MCF 10A (cell line): ENCODE measurements at regions of chr4 and their contacts with region 1.

Region 1: GRCh38 chr4:165327211-165328100 is at the start of gene MSMO1:
- DNase-seq: peak; percentile 99
- H3K4me3 Mint-ChIP-seq: no peak within 1 kb of the TSS
- H3K27ac Mint-ChIP-seq: no peak within 1 kb of the TSS
- H3K4me1 Mint-ChIP-seq: peaks cover 37% of the 10 kb centered on the region
- H3K27me3 Mint-ChIP-seq: no peaks in the 10 kb centered on the region
- CTCF ChIP-seq: no peak
- total RNA-seq, gene MSMO1: 80.4 and 94.9 TPM in 2 replicates

Region 2: DNA sequence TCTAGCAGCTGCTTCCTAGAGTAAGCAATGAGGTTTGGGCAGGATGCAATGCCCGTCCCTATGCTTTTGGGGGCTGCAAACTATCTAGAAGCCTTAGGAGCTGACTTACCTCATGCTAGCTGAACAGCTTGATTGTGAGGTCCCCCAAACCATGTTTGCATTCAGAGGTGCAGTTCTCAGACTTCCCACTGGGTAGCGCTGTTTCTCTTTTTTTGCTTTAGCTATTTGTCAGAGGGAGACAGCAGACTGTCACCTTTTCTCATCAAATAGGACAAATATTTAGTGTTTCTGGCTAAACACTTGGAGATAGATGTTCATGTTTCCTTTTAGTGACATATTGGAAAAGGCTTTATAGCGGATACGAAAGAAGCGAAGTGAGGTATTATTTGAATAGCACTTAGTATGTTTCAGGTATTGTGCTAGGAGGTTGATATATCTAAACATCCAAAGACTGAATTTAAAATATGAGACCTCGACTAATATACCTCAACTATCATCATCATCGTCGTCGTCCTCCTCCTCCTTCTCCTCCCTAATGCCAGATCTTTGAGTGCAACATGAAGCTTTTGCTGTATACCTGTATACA is 196.1 kb before region 1 on chr4:
- CTCF ChIA-PET with region 1: interaction called, 22 read pairs
- POLR2A ChIA-PET with region 1: interaction called, 32 read pairs
- intact Hi-C with region 1: loop called (anchors 1 kb)
- DNase-seq: peak; percentile 78
- H3K4me3 Mint-ChIP-seq: no peak overlapping the region
- H3K27ac Mint-ChIP-seq: no peak overlapping the region
- H3K4me1 Mint-ChIP-seq: peaks cover 6% of the 10 kb centered on the region
- H3K27me3 Mint-ChIP-seq: no peaks in the 10 kb centered on the region
- CTCF ChIP-seq: peak; percentile 86

Region 3: DNA sequence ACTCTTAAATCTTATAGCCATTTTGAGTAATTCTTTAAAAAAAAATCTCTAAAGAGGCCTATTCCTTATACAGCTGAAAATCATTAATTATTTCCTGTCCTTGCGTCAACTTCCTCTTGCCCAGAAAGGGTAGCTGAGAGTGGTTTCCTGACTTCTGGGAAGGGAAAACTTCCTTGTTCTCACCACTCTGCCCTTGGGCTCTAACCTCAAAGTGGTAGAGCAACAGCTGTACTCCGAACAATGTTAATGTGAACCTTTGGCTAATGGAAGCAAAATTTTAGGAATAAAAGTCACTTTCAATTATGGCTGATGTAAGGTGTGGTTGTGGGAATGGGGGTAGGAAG is 104.8 kb before region 1 on chr4:
- CTCF ChIA-PET with region 1: no interaction called
- POLR2A ChIA-PET with region 1: interaction called, 12 read pairs
- intact Hi-C with region 1: loop called (anchors 5 kb)
- DNase-seq: peak; percentile 82
- H3K4me3 Mint-ChIP-seq: peak overlapping the region; percentile 64
- H3K27ac Mint-ChIP-seq: peak overlapping the region; percentile 95
- H3K4me1 Mint-ChIP-seq: peaks cover 32% of the 10 kb centered on the region
- H3K27me3 Mint-ChIP-seq: no peaks in the 10 kb centered on the region
- CTCF ChIP-seq: no peak

Region 4: GRCh38 chr4:165288639-165289422 is 38.6 kb before region 1 on chr4:
- CTCF ChIA-PET with region 1: no interaction called
- POLR2A ChIA-PET with region 1: interaction called, 9 read pairs
- intact Hi-C with region 1: loop called (anchors 2 kb)
- DNase-seq: peak; percentile 69
- H3K4me3 Mint-ChIP-seq: no peak overlapping the region
- H3K27ac Mint-ChIP-seq: peak overlapping the region; percentile 6
- H3K4me1 Mint-ChIP-seq: peaks cover 20% of the 10 kb centered on the region
- H3K27me3 Mint-ChIP-seq: no peaks in the 10 kb centered on the region
- CTCF ChIP-seq: no peak

Region 5: GRCh38 chr4:165312506-165312905 is 14.9 kb before region 1 on chr4:
- CTCF ChIA-PET with region 1: interaction called, 3 read pairs
- POLR2A ChIA-PET with region 1: interaction called, 112 read pairs
- intact Hi-C with region 1: loop called (anchors 1 kb)
- DNase-seq: peak; percentile 68
- H3K4me3 Mint-ChIP-seq: no peak overlapping the region
- H3K27ac Mint-ChIP-seq: peak overlapping the region; percentile 13
- H3K4me1 Mint-ChIP-seq: peaks cover 36% of the 10 kb centered on the region
- H3K27me3 Mint-ChIP-seq: no peaks in the 10 kb centered on the region
- CTCF ChIP-seq: no peak

Region 6: GRCh38 chr4:165355900-165356300 is 28.4 kb after region 1 on chr4:
- CTCF ChIA-PET with region 1: interaction called, 3 read pairs
- POLR2A ChIA-PET with region 1: interaction called, 13 read pairs
- intact Hi-C with region 1: no loop called
- DNase-seq: peak; percentile 66
- H3K4me3 Mint-ChIP-seq: no peak overlapping the region
- H3K27ac Mint-ChIP-seq: no peak overlapping the region
- H3K4me1 Mint-ChIP-seq: peaks cover 32% of the 10 kb centered on the region
- H3K27me3 Mint-ChIP-seq: no peaks in the 10 kb centered on the region
- CTCF ChIP-seq: peak; percentile 50

Region 7: GRCh38 chr4:165415910-165416309 is 88.5 kb after region 1 on chr4:
- CTCF ChIA-PET with region 1: no interaction called
- POLR2A ChIA-PET with region 1: no interaction called
- intact Hi-C with region 1: no loop called
- DNase-seq: no peak
- H3K4me3 Mint-ChIP-seq: no peak overlapping the region
- H3K27ac Mint-ChIP-seq: no peak overlapping the region
- H3K4me1 Mint-ChIP-seq: peaks cover 6% of the 10 kb centered on the region
- H3K27me3 Mint-ChIP-seq: no peaks in the 10 kb centered on the region
- CTCF ChIP-seq: no peak

Region 8: GRCh38 chr4:165464813-165465381 is 137.4 kb after region 1 on chr4:
- CTCF ChIA-PET with region 1: interaction called, 4 read pairs
- POLR2A ChIA-PET with region 1: interaction called, 3 read pairs
- intact Hi-C with region 1: loop called (anchors 2 kb)
- DNase-seq: peak; percentile 41
- H3K4me3 Mint-ChIP-seq: no peak overlapping the region
- H3K27ac Mint-ChIP-seq: no peak overlapping the region
- H3K4me1 Mint-ChIP-seq: peaks cover 5% of the 10 kb centered on the region
- H3K27me3 Mint-ChIP-seq: no peaks in the 10 kb centered on the region
- CTCF ChIP-seq: peak; percentile 78